ENCODE measurements at regions of chr3 and their contacts with region 1.

Region 1: GRCh38 chr3:81760924-81761903 is at the start of gene GBE1:
- DNase-seq: peak; percentile 90
- H3K4me3 ChIP-seq: peak within 1 kb of the TSS; percentile 77 to 95 (median 83)
- H3K27ac ChIP-seq: peak within 1 kb of the TSS; percentile 96
- H3K4me1 ChIP-seq: peaks cover 24% of the 10 kb centered on the region
- H3K27me3 ChIP-seq: no peaks in the 10 kb centered on the region
- CTCF ChIP-seq: peak; percentile 32 to 37
- POLR2A ChIP-seq: peak; percentile 93
- total RNA-seq, gene GBE1: 107 and 110 TPM in 2 replicates

Region 2: DNA sequence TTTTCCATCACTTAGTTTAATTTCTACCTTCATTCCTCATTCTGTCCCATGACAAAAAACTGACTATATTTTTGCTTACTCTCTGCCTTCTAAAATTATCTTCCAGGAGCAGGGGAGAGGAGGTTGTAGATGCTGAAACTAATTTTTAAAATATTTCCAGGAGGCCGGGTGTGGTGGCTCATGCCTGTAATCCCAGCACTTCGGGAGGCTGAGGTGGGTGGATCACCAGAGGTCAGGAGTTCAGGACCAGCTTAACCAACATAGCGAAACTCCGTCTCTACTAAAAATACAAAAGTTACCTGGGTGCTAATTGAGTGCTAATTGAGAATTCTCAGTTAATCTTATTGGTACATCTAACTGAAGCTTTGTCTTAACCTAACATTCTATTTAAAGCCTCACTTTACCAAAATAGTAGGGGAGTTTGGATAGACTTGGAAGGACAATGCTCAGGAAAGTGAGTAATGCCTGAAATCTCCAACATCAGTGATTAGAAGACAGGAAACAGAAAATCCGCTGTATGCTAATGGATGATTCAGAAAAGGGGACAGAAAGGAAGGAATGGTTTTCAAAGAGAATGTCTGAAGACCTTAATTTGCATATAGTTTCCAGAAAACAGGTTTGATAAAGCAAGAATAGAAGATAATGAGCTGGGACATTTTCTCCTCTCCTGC is 335.9 kb before region 1 on chr3:
- CTCF ChIA-PET with region 1: no interaction called
- POLR2A ChIA-PET with region 1: no interaction called
- dilution Hi-C with region 1: no loop called
- intact Hi-C with region 1: loop called (anchors 1 kb)
- DNase-seq: peak; percentile 89
- H3K4me3 ChIP-seq: peak overlapping the region in 1 of 3 experiments; percentile 38
- H3K27ac ChIP-seq: peak overlapping the region; percentile 97
- H3K4me1 ChIP-seq: peaks cover 27% of the 10 kb centered on the region
- H3K27me3 ChIP-seq: no peaks in the 10 kb centered on the region
- CTCF ChIP-seq: no peak
- POLR2A ChIP-seq: no peak

Region 3: DNA sequence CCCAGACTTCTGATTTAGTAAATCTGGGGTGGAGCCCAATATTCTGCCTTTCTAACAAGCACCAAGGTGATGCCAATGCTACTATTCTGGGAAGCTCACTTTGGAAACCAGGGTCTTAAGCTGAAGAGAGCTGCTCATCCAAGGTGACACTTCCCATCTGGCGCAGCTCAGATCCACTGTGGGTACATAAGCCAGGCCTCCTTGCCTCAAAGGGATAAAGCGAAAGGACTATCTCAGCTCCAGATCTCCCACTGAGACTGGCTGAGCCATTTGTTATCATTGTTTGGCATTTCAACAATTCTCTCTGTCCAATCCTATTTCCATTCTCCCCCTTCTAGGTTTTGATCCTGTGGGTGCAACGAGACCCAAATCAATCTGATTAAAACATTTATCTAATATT is 323.5 kb before region 1 on chr3:
- CTCF ChIA-PET with region 1: no interaction called
- POLR2A ChIA-PET with region 1: no interaction called
- dilution Hi-C with region 1: no loop called
- intact Hi-C with region 1: no loop called
- DNase-seq: no peak
- H3K4me3 ChIP-seq: no peak overlapping the region
- H3K27ac ChIP-seq: no peak overlapping the region
- H3K4me1 ChIP-seq: no peaks in the 10 kb centered on the region
- H3K27me3 ChIP-seq: no peaks in the 10 kb centered on the region
- CTCF ChIP-seq: no peak
- POLR2A ChIP-seq: no peak

Region 4: DNA sequence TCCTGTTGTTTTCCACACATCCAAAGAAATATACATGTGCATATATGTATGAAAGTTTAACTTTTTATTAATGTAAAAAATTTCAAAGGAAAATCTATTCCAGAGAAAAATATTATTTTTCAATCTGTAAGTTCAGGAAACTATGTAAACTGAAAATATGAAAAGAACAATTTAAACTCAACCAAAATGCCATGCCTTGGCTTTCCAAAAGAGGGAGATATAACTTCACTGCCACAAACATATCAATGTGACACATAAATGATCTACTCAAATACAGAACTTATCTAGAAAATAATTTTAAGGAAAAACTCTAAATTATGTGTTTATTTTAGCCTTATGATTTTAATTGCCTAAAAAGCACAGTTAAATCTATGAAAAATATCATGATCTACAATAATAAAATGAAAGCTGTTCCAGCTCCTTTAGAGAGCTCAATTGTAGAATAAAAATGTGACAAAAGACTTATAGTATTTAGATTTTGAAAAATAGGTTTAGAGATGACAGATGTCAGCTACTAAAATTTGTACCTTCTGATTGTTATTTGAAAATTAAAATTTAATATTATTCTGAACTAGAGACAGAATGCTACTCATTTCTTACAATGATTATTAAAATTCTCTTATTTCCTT is 94.6 kb before region 1 on chr3:
- CTCF ChIA-PET with region 1: interaction called, 5 read pairs
- POLR2A ChIA-PET with region 1: no interaction called
- dilution Hi-C with region 1: no loop called
- intact Hi-C with region 1: loop called (anchors 1 kb)
- DNase-seq: peak; percentile 60
- H3K4me3 ChIP-seq: no peak overlapping the region
- H3K27ac ChIP-seq: no peak overlapping the region
- H3K4me1 ChIP-seq: no peaks in the 10 kb centered on the region
- H3K27me3 ChIP-seq: no peaks in the 10 kb centered on the region
- CTCF ChIP-seq: peak; percentile 43 to 52
- POLR2A ChIP-seq: no peak

Region 5: GRCh38 chr3:81743096-81744025 is 17.9 kb before region 1 on chr3:
- CTCF ChIA-PET with region 1: interaction called, 15 read pairs
- POLR2A ChIA-PET with region 1: interaction called, 10 read pairs
- dilution Hi-C with region 1: no loop called
- intact Hi-C with region 1: loop called (anchors 1 kb)
- DNase-seq: peak; percentile 97
- H3K4me3 ChIP-seq: peak overlapping the region in 1 of 3 experiments; percentile 12
- H3K27ac ChIP-seq: peak overlapping the region; percentile 98
- H3K4me1 ChIP-seq: peaks cover 46% of the 10 kb centered on the region
- H3K27me3 ChIP-seq: no peaks in the 10 kb centered on the region
- CTCF ChIP-seq: no peak
- POLR2A ChIP-seq: peak; percentile 50

Region 6: GRCh38 chr3:81816473-81817250 is 55.4 kb after region 1 on chr3:
- CTCF ChIA-PET with region 1: no interaction called
- POLR2A ChIA-PET with region 1: no interaction called
- dilution Hi-C with region 1: no loop called
- intact Hi-C with region 1: no loop called
- DNase-seq: no peak
- H3K4me3 ChIP-seq: no peak overlapping the region
- H3K27ac ChIP-seq: no peak overlapping the region
- H3K4me1 ChIP-seq: no peaks in the 10 kb centered on the region
- H3K27me3 ChIP-seq: no peaks in the 10 kb centered on the region
- CTCF ChIP-seq: no peak
- POLR2A ChIP-seq: no peak

Region 7: GRCh38 chr3:82133070-82133606 is 371.9 kb after region 1 on chr3:
- CTCF ChIA-PET with region 1: interaction called, 3 read pairs
- POLR2A ChIA-PET with region 1: no interaction called
- dilution Hi-C with region 1: no loop called
- intact Hi-C with region 1: loop called (anchors 1 kb)
- DNase-seq: peak; percentile 71
- H3K4me3 ChIP-seq: no peak overlapping the region
- H3K27ac ChIP-seq: no peak overlapping the region
- H3K4me1 ChIP-seq: no peaks in the 10 kb centered on the region
- H3K27me3 ChIP-seq: no peaks in the 10 kb centered on the region
- CTCF ChIP-seq: peak; percentile 75 to 77
- POLR2A ChIP-seq: no peak